Activated naive CD4-positive, alpha-beta T cell treated with anti-CD3 and anti-CD28 coated beads for 36 hours (primary cell): ENCODE measurements at regions of chr15 and their contacts with region 1.

Region 1: DNA sequence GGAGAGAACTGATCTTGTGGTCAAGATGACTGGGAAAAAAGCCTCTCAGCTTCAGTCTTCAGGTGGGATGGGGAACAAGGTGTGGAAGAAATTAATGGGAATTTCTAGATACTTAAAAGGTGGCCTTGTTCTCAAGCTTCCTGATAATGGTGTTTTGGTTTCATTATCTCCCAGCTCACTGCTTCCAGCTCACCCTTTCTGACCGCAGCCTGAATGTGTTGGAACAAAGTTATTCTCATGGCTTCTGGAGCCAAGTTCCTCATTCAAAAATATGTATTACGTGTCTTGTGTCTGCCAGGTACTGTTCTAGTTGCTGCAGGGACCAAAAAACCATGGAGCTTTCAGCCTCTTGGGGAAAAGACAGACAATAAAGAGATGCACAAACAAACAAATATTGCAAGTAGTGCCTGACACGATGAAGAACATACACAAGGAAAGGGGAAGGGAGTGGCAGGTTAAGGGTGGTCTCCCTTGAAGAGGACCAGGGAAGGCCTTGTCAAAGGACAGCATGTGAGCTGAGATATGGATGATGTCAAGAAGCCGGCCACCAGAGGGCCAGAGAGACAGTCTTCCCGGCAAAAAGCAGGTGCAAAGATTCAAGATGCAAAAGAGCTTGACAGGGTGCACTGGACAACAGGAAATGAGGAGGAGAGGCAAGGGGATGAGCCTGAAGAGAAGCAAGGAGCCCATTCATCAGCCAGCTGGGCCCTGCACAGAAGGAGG is 35.5 kb downstream of the ARRDC4 start:
- DNase-seq: peak; percentile 13
- H3K4me3 Mint-ChIP-seq: no peak overlapping the region
- H3K27ac Mint-ChIP-seq: no peak overlapping the region
- H3K4me1 Mint-ChIP-seq: peaks cover 12% of the 10 kb centered on the region
- H3K27me3 Mint-ChIP-seq: no peaks in the 10 kb centered on the region

Region 2: GRCh38 chr15:97968380-97968779 is 27.7 kb before region 1 on chr15:
- CTCF ChIA-PET with region 1: interaction called, 12 read pairs
- intact Hi-C with region 1: no loop called
- DNase-seq: no peak
- H3K4me3 Mint-ChIP-seq: no peak overlapping the region
- H3K27ac Mint-ChIP-seq: no peak overlapping the region
- H3K4me1 Mint-ChIP-seq: no peaks in the 10 kb centered on the region
- H3K27me3 Mint-ChIP-seq: no peaks in the 10 kb centered on the region

Region 3: DNA sequence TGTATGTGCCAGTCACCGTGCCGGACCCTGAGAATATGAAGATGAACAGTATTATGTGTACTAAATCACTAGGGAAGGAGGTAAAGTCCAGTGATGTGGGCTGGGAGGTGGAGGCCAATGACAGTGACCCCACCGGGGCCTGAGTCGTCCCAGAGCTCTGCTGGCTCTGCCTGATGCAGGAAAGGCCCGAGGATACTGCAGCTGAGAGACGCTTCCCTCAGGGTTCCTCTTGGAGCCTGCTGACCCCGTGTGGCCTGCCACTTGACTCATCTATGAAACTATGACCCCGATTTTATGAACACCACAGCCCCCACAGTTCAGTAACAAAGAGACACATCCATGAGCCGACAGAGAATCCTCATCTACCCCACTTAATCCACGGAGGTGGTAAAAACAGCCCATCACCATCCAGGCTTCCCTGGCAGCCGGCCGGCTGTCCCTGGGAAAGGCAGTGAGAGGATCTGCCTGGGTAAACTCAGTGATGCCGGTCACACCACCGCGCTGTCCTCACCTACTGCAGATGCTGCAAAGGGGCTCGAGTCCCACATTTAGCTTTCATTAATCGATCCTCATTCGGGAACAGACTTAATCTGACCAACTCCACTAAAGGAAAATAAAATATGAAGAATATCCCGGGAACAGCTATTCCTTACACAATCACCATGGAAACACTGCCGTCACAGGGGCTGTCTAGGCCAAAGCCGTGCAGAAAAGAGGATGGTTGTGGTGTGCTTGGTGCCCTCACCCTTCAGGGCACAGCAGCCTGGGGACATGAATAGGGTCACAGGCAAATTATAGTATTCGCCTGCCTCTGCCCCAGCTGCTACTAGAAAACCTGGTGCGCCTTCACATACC is 47.3 kb after region 1 on chr15:
- CTCF ChIA-PET with region 1: no interaction called
- intact Hi-C with region 1: no loop called
- DNase-seq: no peak
- H3K4me3 Mint-ChIP-seq: no peak overlapping the region
- H3K27ac Mint-ChIP-seq: no peak overlapping the region
- H3K4me1 Mint-ChIP-seq: no peaks in the 10 kb centered on the region
- H3K27me3 Mint-ChIP-seq: peaks cover 5% of the 10 kb centered on the region